ENCODE measurements at regions of chr15 and their contacts with region 1.

Region 1: DNA sequence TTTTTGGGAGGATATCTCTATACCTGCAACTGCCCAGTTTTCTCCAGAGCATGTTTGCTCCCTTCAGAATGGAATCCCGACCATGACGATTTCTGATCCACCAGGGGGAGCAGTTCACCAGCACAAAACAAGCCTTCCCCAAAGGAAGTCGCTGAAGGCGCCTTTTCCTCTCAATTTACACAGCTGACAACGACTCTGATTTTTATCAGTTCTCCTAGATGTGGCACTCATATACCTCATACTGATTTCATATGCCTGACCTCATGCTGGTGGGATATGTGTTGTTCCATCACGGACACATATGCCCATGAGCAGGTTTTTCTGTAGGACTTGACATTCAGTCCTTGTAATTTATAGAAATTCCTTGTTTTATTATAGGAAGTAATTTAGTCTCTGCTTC is 1028.2 kb downstream of the MCTP2 start:
- DNase-seq: peak; percentile 62 to 73 (median 66)
- ATAC-seq: peak; percentile 85 to 88
- H3K4me3 ChIP-seq: no peak overlapping the region
- H3K27ac ChIP-seq: peak overlapping the region; percentile 17
- H3K4me1 ChIP-seq: peaks cover 8% of the 10 kb centered on the region
- H3K27me3 ChIP-seq: no peaks in the 10 kb centered on the region

Region 2: DNA sequence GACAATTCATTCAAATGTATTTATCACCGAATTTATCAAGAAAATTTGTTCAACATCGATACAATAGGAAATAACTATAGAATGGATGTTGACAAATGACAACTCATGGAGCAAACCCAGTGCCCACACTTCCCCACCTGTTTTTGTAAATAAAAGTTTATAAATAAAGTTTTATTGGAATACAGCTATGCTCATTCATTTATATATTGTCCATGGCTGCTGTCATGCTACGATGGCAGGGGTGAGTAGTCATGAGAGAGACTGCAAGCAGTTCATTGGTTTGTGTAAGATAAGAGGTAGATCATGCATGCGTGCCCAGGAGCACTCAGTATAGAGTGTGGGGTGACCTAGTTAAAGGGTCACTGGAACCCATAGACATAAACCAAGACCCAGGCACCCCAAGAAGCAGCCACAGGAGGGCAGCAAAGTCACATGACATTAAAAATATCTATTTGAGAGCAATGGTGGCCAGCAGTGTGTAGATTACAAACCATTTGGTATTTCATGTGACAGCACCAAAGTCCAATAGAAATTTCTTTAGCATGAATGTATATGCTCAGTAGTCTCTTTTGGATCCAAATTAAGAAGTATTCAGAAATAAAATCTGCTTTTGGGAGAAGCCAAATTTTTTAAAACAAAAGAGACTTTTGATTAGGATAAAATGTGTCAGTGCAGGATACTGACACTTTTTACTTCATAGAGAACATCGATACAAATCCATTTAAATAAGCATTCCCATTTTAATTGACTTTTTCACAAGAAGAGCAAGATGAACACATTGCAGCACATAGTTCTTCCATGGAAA is 233.4 kb before region 1 on chr15:
- intact Hi-C with region 1: loop called in 1 of 4 experiments (anchors 10 kb)
- DNase-seq: peak; percentile 44 to 82 (median 63)
- ATAC-seq: peak in 1 of 2 donors; percentile 72
- H3K4me3 ChIP-seq: no peak overlapping the region
- H3K27ac ChIP-seq: no peak overlapping the region
- H3K4me1 ChIP-seq: no peaks in the 10 kb centered on the region
- H3K27me3 ChIP-seq: no peaks in the 10 kb centered on the region

Region 3: GRCh38 chr15:95459273-95459672 is 199.8 kb after region 1 on chr15:
- intact Hi-C with region 1: loop called in 1 of 4 experiments (anchors 10 kb)
- DNase-seq: no peak
- ATAC-seq: peak; percentile 39 to 88
- H3K4me3 ChIP-seq: no peak overlapping the region
- H3K27ac ChIP-seq: peak overlapping the region; percentile 32
- H3K4me1 ChIP-seq: no peaks in the 10 kb centered on the region
- H3K27me3 ChIP-seq: no peaks in the 10 kb centered on the region

Region 4: GRCh38 chr15:96345560-96346399 is 1086.3 kb after region 1 on chr15:
- intact Hi-C with region 1: loop called in 2 of 4 experiments (anchors 5 to 10 kb)
- DNase-seq: peak; percentile 88 to 95 (median 94)
- ATAC-seq: peak; percentile 79 to 85
- H3K4me3 ChIP-seq: peak overlapping the region; percentile 44
- H3K27ac ChIP-seq: peak overlapping the region; percentile 89
- H3K4me1 ChIP-seq: peaks cover 10% of the 10 kb centered on the region
- H3K27me3 ChIP-seq: no peaks in the 10 kb centered on the region

Measured in right cardiac atrium (tissue), 5 donors.